Cardiac septum (tissue), 1 donor: ENCODE measurements at regions of chr19 and their contacts with region 1.

Region 1: GRCh38 chr19:49157445-49158224 is at the start of gene TRPM4:
- DNase-seq: peak; percentile 96
- total RNA-seq, gene TRPM4: 44.1 TPM

Region 2: DNA sequence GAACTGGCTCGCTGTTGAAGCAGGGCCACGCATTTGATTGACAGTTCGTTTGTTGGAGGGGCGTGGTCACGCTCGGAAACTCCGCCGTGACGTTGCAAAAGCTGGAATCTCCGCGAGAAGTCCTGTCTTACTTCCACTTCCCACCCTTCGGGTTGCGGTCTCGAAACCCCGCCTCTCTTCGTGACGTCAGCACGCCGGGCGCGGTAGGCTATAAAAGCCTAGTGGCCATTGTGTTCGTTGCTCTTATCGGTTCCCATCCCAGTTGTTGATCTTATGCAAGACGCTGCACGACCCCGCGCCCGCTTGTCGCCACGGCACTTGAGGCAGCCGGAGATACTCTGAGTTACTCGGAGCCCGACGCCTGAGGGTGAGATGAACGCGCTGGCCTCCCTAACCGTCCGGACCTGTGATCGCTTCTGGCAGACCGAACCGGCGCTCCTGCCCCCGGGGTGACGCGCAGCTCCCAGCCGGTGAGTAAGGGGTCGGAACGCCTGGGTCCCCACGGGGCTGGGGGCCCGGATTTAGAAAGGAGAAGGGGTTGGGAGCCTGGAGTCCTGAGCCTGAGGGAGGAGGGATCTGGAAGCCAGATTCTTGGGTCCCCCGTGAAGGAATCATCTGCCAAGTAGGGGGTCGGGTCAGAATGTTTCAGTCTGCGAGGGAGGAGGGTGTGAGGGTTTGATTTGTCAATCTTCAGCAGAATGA is 285.3 kb before region 1 on chr19 and contains the start of gene PPP1R15A:
- intact Hi-C with region 1: loop called (anchors 5 kb)
- DNase-seq: peak; percentile 100
- total RNA-seq, gene PPP1R15A: 87.0 TPM

Region 3: DNA sequence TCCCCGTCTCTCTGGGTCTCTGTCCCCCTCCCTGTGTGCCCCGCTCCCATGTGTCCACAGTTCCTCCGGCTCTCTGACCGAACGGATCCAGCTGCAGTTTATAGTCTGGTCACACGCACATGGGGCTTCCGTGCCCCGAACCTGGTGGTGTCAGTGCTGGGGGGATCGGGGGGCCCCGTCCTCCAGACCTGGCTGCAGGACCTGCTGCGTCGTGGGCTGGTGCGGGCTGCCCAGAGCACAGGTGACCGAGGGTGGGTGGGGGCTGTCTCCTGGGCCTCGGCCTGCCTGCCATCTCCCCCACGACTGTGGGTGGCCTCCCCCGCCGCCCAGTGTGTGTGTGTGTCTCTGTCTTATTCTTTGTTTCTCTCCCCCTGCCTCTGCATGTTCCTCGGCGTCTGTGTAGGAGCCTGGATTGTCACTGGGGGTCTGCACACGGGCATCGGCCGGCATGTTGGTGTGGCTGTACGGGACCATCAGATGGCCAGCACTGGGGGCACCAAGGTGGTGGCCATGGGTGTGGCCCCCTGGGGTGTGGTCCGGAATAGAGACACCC is 10.3 kb after region 1 on chr19:
- intact Hi-C with region 1: no loop called
- DNase-seq: no peak